Heart left ventricle (tissue), 16 donors: ENCODE measurements at regions of chr12 and their contacts with region 1.

Region 1: DNA sequence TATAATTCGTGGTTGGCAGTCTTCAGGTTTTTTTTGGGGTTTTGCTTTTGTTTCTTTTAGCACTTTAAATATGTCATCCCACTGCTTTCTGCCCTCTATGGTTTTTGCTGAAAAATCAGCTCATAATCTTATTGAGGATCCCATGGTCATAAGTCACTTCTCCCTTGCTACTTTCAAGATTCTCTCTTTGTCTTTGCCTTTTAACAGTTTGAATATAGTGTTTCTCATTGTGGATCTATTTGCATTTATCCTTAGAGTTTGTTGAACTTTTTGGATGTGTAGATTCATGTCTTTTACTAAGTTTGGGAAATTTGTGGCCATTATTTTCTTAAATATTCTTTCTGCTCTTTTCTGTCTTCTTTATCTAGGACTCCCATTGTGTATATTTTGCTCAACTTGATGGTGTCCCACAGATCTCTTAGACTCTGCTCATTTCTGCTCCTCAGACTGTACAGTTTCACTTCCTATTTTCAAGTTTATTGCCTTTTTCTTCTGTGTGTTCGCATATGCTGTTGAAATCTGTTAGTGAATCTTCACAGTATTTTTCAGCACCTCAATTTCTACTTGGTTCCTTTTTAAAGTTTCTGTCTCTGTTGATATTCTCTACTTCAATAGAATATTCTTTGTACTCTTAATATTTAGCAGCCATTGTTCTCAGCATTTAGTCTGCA is 70.8 kb downstream of the WNK1 start:
- DNase-seq: no peak
- ATAC-seq: no peak
- H3K4me3 ChIP-seq: no peak overlapping the region
- H3K27ac ChIP-seq: peak overlapping the region in 1 of 12 donors; percentile 47
- H3K4me1 ChIP-seq: peaks cover 0 to 40% (median 16%) of the 10 kb centered on the region in 12 donors
- H3K27me3 ChIP-seq: no peaks in the 10 kb centered on the region
- CTCF ChIP-seq: no peak
- POLR2A ChIP-seq: no peak

Region 2: GRCh38 chr12:851913-852312 is 28.8 kb after region 1 on chr12:
- intact Hi-C with region 1: no loop called
- DNase-seq: no peak
- ATAC-seq: peak in 1 of 4 donors; percentile 32
- H3K4me3 ChIP-seq: no peak overlapping the region
- H3K27ac ChIP-seq: peak overlapping the region in 2 of 12 donors; percentile 9 to 33
- H3K4me1 ChIP-seq: peaks cover 0 to 51% (median 27%) of the 10 kb centered on the region in 12 donors
- H3K27me3 ChIP-seq: no peaks in the 10 kb centered on the region
- CTCF ChIP-seq: no peak
- POLR2A ChIP-seq: no peak

Region 3: GRCh38 chr12:1108276-1108675 is 285.1 kb after region 1 on chr12:
- intact Hi-C with region 1: loop called in 1 of 10 experiments (anchors 10 kb)
- DNase-seq: no peak
- ATAC-seq: no peak
- H3K4me3 ChIP-seq: no peak overlapping the region
- H3K27ac ChIP-seq: no peak overlapping the region
- H3K4me1 ChIP-seq: peaks cover 0 to 7% (median 0%) of the 10 kb centered on the region in 12 donors
- H3K27me3 ChIP-seq: no peaks in the 10 kb centered on the region
- CTCF ChIP-seq: no peak
- POLR2A ChIP-seq: no peak

Region 4: DNA sequence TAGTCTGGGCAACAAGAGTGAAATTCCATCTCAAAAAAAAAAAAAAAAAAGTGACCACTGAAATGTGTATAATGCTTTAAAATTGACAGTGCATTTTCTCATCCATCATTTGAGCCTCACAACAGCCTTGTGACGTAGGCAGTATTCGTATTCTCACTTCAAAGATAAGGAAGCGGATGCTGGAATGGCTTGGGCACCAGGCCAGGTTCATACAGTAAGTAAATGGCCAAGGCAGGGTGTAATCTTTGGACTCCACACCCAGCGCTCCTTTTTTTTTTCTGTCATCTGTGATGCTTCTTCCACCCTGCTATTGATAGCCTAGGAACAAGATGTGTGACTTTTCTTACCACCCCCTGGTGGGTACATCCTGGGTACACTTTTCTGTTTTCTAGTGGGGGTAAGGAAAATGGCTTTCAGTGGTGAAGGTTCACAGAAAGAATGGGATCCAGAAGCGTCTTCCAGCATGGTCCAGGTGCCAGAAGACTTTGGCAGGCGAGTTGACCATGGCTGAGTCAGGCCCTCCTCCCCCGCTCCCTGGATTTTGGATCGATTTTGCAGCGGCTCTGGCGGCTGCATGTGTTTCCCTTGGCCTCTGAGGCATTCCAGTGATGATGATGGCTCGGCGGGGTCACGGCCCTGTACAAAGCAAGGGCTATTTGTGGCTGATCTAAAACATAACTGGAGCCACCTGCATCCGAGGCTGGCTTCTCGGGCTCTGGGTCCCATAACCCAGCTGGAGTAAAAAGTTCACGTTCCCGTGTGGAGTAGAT is 1340.2 kb after region 1 on chr12:
- intact Hi-C with region 1: no loop called
- DNase-seq: peak; percentile 91 to 95 (median 93)
- ATAC-seq: peak; percentile 79 to 94 (median 91)
- H3K4me3 ChIP-seq: no peak overlapping the region
- H3K27ac ChIP-seq: peak overlapping the region; percentile 60 to 86 (median 82)
- H3K4me1 ChIP-seq: peaks cover 4 to 67% (median 43%) of the 10 kb centered on the region in 12 donors
- H3K27me3 ChIP-seq: no peaks in the 10 kb centered on the region
- CTCF ChIP-seq: peak in 4 of 12 donors; percentile 5 to 14 (median 8)
- POLR2A ChIP-seq: no peak